ENCODE measurements at regions of chr11 and their contacts with region 1.

Region 1: GRCh38 chr11:1153951-1154493 is 3.7 kb upstream of the MUC5AC start:
- DNase-seq: peak in 2 of 5 donors; percentile 19 to 36
- H3K4me3 ChIP-seq: no peak overlapping the region
- H3K27ac ChIP-seq: no peak overlapping the region
- H3K4me1 ChIP-seq: no peaks in the 10 kb centered on the region
- H3K27me3 ChIP-seq: no peaks in the 10 kb centered on the region
- CTCF ChIP-seq: no peak
- EP300 ChIP-seq: no peak
- POLR2A ChIP-seq: no peak

Region 2: GRCh38 chr11:1196516-1197391 is 42.7 kb after region 1 on chr11:
- intact Hi-C with region 1: loop called in 1 of 4 experiments (anchors 1 kb)
- DNase-seq: peak in 2 of 5 donors; percentile 9 to 24
- H3K4me3 ChIP-seq: no peak overlapping the region
- H3K27ac ChIP-seq: no peak overlapping the region
- H3K4me1 ChIP-seq: no peaks in the 10 kb centered on the region
- H3K27me3 ChIP-seq: no peaks in the 10 kb centered on the region
- CTCF ChIP-seq: no peak
- EP300 ChIP-seq: no peak
- POLR2A ChIP-seq: no peak

Measured in ovary (tissue), 10 donors.